Sigmoid colon (tissue), 7 donors: ENCODE measurements at regions of chr20 and their contacts with region 1.

Region 1: GRCh38 chr20:38926142-38926933 is at the start of gene FAM83D:
- DNase-seq: peak; percentile 98
- H3K4me3 ChIP-seq: peak within 1 kb of the TSS; percentile 48 to 79 (median 60)
- H3K27ac ChIP-seq: peak within 1 kb of the TSS; percentile 75 to 87 (median 84)
- H3K4me1 ChIP-seq: peaks cover 0 to 38% (median 13%) of the 10 kb centered on the region in 4 donors
- H3K27me3 ChIP-seq: no peaks in the 10 kb centered on the region
- CTCF ChIP-seq: no peak
- EP300 ChIP-seq: no peak
- POLR2A ChIP-seq: peak; percentile 85 to 95
- total RNA-seq, gene FAM83D: 14.3 to 291 (median 57.8) TPM

Region 2: DNA sequence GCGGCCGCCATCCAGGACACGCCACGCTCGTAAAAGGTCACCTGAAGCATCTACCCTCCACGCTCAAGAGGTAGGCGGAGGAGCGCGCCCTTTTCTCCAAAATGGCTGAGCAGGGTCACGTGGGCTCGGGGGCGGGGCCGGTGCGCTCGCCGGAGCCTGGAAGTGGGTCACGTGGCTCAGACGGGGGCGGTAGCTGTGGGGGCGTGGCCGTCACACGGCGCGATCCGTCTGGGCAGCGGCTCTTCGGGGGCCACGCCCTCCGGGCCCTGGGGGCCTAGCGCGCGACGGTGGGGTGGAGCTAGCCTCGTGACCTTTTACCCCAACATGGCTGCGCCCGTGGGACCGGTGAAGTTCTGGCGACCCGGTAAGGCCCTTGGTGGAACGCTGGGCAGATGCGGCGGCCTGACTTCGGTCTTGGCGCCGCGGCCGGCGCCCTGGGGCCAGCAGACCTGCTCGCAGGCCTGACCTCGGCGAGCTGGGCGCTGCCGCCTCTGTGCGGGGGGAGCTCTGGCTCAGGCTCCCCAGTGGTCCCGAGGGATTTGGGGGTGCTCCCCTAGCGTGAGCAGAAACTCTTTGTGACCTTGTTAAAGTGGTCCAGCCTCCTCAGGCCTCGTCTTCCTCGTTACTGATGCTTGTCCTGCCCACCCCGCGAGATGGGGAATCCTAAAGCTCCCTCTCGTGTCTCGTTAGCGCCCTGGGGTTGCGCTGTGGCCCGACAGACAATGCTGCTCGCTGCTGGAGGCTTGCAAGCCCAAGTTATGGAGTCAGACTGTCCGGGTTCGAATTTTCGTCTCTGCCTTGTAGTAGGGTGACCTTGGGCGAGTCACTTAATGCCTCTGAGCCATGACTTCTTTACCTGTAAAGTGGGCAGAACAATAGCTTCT is 35.9 kb after region 1 on chr20 and contains the start of gene DHX35:
- intact Hi-C with region 1: loop called (anchors 2 kb)
- DNase-seq: peak; percentile 99
- H3K4me3 ChIP-seq: peak within 1 kb of the TSS; percentile 87 to 95 (median 92)
- H3K27ac ChIP-seq: peak within 1 kb of the TSS; percentile 96 to 98 (median 98)
- H3K4me1 ChIP-seq: peaks cover 0 to 43% (median 17%) of the 10 kb centered on the region in 4 donors
- H3K27me3 ChIP-seq: no peaks in the 10 kb centered on the region
- CTCF ChIP-seq: peak in 3 of 4 experiments; percentile 9 to 30 (median 15)
- EP300 ChIP-seq: peak in 1 of 4 donors; percentile 56
- POLR2A ChIP-seq: peak in 1 of 2 donors; percentile 25
- total RNA-seq, gene DHX35: 16.1 to 33.2 (median 18.3) TPM

Region 3: GRCh38 chr20:38975539-38976120 is 49.3 kb after region 1 on chr20:
- intact Hi-C with region 1: no loop called
- DNase-seq: no peak
- H3K4me3 ChIP-seq: no peak overlapping the region
- H3K27ac ChIP-seq: peak overlapping the region in 3 of 4 donors; percentile 87 to 98 (median 96)
- H3K4me1 ChIP-seq: peaks cover 0 to 60% (median 7%) of the 10 kb centered on the region in 4 donors
- H3K27me3 ChIP-seq: no peaks in the 10 kb centered on the region
- CTCF ChIP-seq: no peak
- EP300 ChIP-seq: peak in 2 of 4 donors; percentile 12 to 50
- POLR2A ChIP-seq: no peak

Region 4: DNA sequence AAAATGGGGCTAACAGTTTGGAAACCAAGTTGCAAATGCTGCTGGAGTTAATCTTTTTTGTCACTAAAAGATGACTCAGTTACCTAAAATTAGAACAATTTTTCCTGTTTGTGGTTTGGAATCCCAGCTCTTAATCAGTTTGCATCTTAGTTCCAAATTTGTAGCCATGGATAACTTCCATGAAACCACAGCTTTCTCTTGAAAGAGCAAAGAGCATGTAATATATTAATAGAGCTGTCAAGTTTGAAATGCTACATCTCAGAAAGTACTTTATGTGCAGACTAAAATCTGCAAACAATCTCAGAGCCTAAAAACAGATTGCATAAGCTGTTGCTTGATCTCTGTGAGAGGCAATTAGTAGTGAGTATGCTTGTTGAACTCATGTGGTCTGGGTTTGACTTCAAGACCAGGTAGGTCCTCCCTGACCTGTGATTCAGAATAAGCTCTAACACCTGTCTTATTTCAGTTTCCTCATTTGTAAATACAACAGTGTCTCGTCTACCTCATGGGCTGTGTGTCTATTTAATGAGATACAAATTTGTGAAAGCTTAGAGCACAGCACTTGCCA is 59.3 kb after region 1 on chr20:
- intact Hi-C with region 1: loop called (anchors 2 kb)
- DNase-seq: no peak
- H3K4me3 ChIP-seq: peak overlapping the region in 1 of 4 donors; percentile 1
- H3K27ac ChIP-seq: peak overlapping the region; percentile 57 to 98 (median 82)
- H3K4me1 ChIP-seq: peaks cover 0 to 68% (median 38%) of the 10 kb centered on the region in 4 donors
- H3K27me3 ChIP-seq: no peaks in the 10 kb centered on the region
- CTCF ChIP-seq: no peak
- EP300 ChIP-seq: peak in 3 of 4 donors; percentile 10 to 71 (median 63)
- POLR2A ChIP-seq: no peak

Region 5: GRCh38 chr20:39081255-39081654 is 154.9 kb after region 1 on chr20:
- intact Hi-C with region 1: loop called (anchors 10 kb)
- DNase-seq: peak; percentile 86
- H3K4me3 ChIP-seq: no peak overlapping the region
- H3K27ac ChIP-seq: no peak overlapping the region
- H3K4me1 ChIP-seq: no peaks in the 10 kb centered on the region
- H3K27me3 ChIP-seq: peaks cover 0 to 7% (median 0%) of the 10 kb centered on the region in 3 donors
- CTCF ChIP-seq: peak; percentile 61 to 93 (median 81)
- EP300 ChIP-seq: no peak
- POLR2A ChIP-seq: no peak

Region 6: GRCh38 chr20:39607141-39607540 is 680.8 kb after region 1 on chr20:
- intact Hi-C with region 1: no loop called
- DNase-seq: no peak
- H3K4me3 ChIP-seq: no peak overlapping the region
- H3K27ac ChIP-seq: no peak overlapping the region
- H3K4me1 ChIP-seq: no peaks in the 10 kb centered on the region
- H3K27me3 ChIP-seq: no peaks in the 10 kb centered on the region
- CTCF ChIP-seq: no peak
- EP300 ChIP-seq: no peak
- POLR2A ChIP-seq: no peak